Activated naive CD4-positive, alpha-beta T cell treated with anti-CD3 and anti-CD28 coated beads for 36 hours (primary cell): ENCODE measurements at regions of chr19 and their contacts with region 1.

Region 1: DNA sequence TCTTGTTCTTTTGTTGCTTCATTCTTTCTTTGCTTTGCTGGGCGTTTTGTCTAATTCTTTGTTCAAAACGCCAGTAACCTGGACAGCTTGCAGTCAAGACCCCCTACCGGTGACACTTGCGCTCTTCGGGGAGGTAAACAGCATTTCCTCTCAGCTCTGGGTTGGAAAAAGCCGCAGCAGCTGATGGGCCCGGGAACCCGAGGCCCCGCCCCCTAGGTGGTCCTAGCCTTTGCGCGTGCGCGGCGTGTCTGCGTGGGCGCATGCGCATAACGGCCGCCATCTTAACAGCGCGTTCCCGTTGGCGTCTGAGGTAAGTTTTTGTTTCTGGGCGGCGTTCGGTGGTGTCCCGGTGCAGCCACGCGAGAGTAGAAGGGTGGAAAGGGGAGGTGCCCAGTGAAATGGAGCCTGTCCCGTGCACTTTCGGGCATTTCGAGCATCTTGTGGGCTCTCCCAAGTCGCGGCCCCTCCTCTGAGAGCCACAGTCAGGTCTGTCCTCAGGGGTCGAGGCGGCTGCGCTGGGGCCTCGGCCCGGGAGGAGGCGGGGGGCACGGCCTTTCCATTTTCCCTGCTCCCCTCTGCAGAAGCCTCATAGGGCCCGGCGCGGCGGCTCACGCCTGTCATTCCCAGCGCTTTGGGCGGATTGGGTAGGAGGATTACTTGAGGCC is at the start of gene ZNF559:
- DNase-seq: peak; percentile 97
- H3K4me3 Mint-ChIP-seq: peak within 1 kb of the TSS; percentile 90
- H3K27ac Mint-ChIP-seq: peak within 1 kb of the TSS; percentile 93
- H3K4me1 Mint-ChIP-seq: peaks cover 28% of the 10 kb centered on the region
- H3K27me3 Mint-ChIP-seq: no peaks in the 10 kb centered on the region
- total RNA-seq, gene ZNF559: 10.3 to 11.2 TPM

Region 2: DNA sequence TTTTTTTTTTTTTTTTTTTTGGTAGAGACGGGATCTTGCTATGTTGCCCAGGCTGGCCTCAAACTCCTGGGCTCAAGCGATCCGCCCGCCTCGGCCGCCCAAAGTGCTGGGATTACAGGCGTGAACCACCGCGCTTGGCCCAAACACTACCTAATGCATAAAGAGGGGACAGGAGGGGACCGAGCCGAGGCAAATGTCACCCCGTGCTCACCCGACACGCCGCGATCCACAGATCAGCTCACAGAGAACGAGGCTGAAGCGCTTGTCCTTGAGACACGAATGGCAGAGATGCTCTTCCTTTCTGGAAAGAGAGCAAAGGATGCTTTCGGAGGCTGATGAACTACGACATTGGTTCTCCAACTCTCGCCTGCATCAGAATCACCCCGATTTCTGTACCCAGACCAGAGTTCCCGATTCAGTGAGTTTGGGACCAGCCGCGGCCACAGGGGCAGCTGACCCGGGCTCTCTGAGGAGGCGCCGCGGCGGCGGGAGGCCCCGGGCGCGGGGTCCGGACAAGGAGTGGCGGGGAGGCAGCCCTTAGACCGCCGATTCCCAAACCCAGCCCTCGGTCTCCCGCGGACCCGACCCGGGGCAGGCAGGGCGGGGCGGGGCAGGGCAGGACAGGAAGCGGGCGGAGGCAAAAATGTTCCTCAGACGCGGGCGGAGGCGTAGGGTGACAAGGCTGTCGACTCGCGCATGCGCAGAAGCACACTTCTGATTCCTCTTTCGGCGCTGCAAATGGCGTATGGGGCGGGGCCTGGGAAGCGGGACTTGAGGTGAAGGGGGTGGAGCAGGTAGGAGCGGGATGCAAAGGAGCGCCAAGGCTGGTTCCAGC is 14.7 kb before region 1 on chr19 and contains the start of gene ZNF699:
- CTCF ChIA-PET with region 1: no interaction called
- intact Hi-C with region 1: loop called (anchors 1 kb)
- DNase-seq: peak; percentile 99
- H3K4me3 Mint-ChIP-seq: peak within 1 kb of the TSS; percentile 86
- H3K27ac Mint-ChIP-seq: peak within 1 kb of the TSS; percentile 97
- H3K4me1 Mint-ChIP-seq: peaks cover 12% of the 10 kb centered on the region
- H3K27me3 Mint-ChIP-seq: peaks cover 2% of the 10 kb centered on the region
- total RNA-seq, gene ZNF699: 4.6 to 6.4 TPM

Region 3: GRCh38 chr19:9435279-9436268 is 111.5 kb after region 1 on chr19 and contains the start of gene ZNF266:
- CTCF ChIA-PET with region 1: interaction called, 3 read pairs
- intact Hi-C with region 1: loop called (anchors 1 kb)
- DNase-seq: peak; percentile 96
- H3K4me3 Mint-ChIP-seq: peak within 1 kb of the TSS; percentile 90
- H3K27ac Mint-ChIP-seq: peak within 1 kb of the TSS; percentile 99
- H3K4me1 Mint-ChIP-seq: peaks cover 20% of the 10 kb centered on the region
- H3K27me3 Mint-ChIP-seq: no peaks in the 10 kb centered on the region
- total RNA-seq, gene ZNF266: 19.7 to 21.9 TPM

Region 4: DNA sequence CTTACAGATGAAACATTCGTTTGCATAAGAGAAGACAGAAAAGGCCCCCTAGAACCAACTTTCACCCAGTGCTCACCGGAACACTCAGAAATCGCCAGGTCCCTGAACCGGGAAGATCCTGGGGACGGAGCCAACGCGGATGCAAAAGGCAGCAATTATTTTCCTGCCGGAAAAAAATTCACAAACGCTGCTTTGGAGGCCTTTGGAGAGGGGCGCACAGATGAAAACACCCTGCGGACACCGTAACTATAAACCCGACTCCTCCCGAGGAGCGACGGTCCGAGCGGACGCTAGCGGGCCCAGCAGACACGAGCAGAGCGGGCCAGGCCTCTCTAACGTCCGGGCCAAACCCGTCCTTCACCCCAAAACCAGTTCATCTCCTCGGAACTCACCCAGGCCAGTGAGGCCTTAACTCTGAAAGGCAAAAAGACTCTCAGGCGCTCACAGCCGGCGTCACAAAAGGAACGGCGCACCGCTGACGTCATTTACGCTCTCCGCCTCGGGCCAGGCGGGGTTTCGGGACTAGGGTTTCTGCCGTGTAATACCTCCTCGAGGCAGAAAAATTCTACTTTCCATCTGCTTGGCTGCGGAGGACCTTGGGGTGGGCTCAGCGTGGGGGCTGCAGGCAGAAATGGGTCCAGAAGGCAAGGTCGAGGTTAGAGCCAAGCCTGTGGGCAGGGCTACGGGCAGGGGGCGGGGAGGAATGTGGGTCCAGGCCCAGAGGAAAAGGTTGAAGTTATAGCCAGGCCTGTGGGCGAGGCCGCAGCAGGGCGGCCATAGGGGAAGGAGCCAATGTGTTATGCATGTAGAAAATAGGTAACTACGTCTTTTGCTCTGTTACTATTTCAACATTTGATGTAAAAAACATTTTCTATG is 214.4 kb after region 1 on chr19 and contains the start of gene ZNF426:
- CTCF ChIA-PET with region 1: no interaction called
- intact Hi-C with region 1: loop called (anchors 2 kb)
- DNase-seq: peak; percentile 95
- H3K4me3 Mint-ChIP-seq: peak within 1 kb of the TSS; percentile 98
- H3K27ac Mint-ChIP-seq: peak within 1 kb of the TSS; percentile 96
- H3K4me1 Mint-ChIP-seq: peaks cover 22% of the 10 kb centered on the region
- H3K27me3 Mint-ChIP-seq: no peaks in the 10 kb centered on the region
- total RNA-seq, gene ZNF426: 11.2 to 12.3 TPM

Region 5: GRCh38 chr19:9818734-9819589 is 494.9 kb after region 1 on chr19 and contains the start of gene FBXL12:
- CTCF ChIA-PET with region 1: no interaction called
- intact Hi-C with region 1: loop called (anchors 2 kb)
- DNase-seq: peak; percentile 100
- H3K4me3 Mint-ChIP-seq: peak within 1 kb of the TSS; percentile 82
- H3K27ac Mint-ChIP-seq: peak within 1 kb of the TSS; percentile 86
- H3K4me1 Mint-ChIP-seq: peaks cover 31% of the 10 kb centered on the region
- H3K27me3 Mint-ChIP-seq: no peaks in the 10 kb centered on the region
- total RNA-seq, gene FBXL12: 17.5 to 19.8 TPM

Region 6: GRCh38 chr19:10219678-10220077 is 895.6 kb after region 1 on chr19:
- CTCF ChIA-PET with region 1: interaction called, 10 read pairs
- intact Hi-C with region 1: no loop called
- DNase-seq: peak; percentile 43
- H3K4me3 Mint-ChIP-seq: no peak overlapping the region
- H3K27ac Mint-ChIP-seq: no peak overlapping the region
- H3K4me1 Mint-ChIP-seq: peaks cover 3% of the 10 kb centered on the region
- H3K27me3 Mint-ChIP-seq: no peaks in the 10 kb centered on the region